ENCODE measurements at regions of chr9 and their contacts with region 1.

Region 1: GRCh38 chr9:114611516-114612271 is 603 bp downstream of the TMEM268 start:
- DNase-seq: peak in 1 of 2 donors; percentile 63
- H3K4me3 ChIP-seq: peak overlapping the region; percentile 74 to 97 (median 79)
- H3K27ac ChIP-seq: peak overlapping the region; percentile 90 to 97
- H3K4me1 ChIP-seq: peaks cover 6 to 8% of the 10 kb centered on the region in 2 donors
- H3K27me3 ChIP-seq: no peaks in the 10 kb centered on the region
- CTCF ChIP-seq: no peak
- POLR2A ChIP-seq: no peak

Region 2: GRCh38 chr9:114525505-114525904 is 86.2 kb before region 1 on chr9:
- intact Hi-C with region 1: no loop called
- DNase-seq: no peak
- H3K4me3 ChIP-seq: no peak overlapping the region
- H3K27ac ChIP-seq: no peak overlapping the region
- H3K4me1 ChIP-seq: no peaks in the 10 kb centered on the region
- H3K27me3 ChIP-seq: peaks cover 0 to 3% of the 10 kb centered on the region in 2 donors
- CTCF ChIP-seq: no peak
- POLR2A ChIP-seq: no peak

Region 3: GRCh38 chr9:114629563-114630090 is 17.9 kb after region 1 on chr9:
- intact Hi-C with region 1: loop called (anchors 2 kb)
- DNase-seq: no peak
- H3K4me3 ChIP-seq: no peak overlapping the region
- H3K27ac ChIP-seq: no peak overlapping the region
- H3K4me1 ChIP-seq: no peaks in the 10 kb centered on the region
- H3K27me3 ChIP-seq: no peaks in the 10 kb centered on the region
- CTCF ChIP-seq: no peak
- POLR2A ChIP-seq: no peak

Measured in breast epithelium (tissue), 4 donors.